ENCODE measurements at regions of chr11 and their contacts with region 1.

Region 1: GRCh38 chr11:2532704-2533586 is 88.1 kb downstream of the KCNQ1 start:
- DNase-seq: peak; percentile 93
- ATAC-seq: peak; percentile 88
- H3K4me3 Mint-ChIP-seq: peak overlapping the region; percentile 45
- H3K27ac Mint-ChIP-seq: no peak overlapping the region
- H3K4me1 Mint-ChIP-seq: peaks cover 19% of the 10 kb centered on the region
- H3K27me3 Mint-ChIP-seq: peaks cover 2% of the 10 kb centered on the region

Region 2: GRCh38 chr11:2305140-2305840 is 227.7 kb before region 1 on chr11:
- CTCF ChIA-PET with region 1: interaction called, 58 read pairs
- DNase-seq: peak; percentile 89
- ATAC-seq: peak; percentile 60
- H3K4me3 Mint-ChIP-seq: peak overlapping the region; percentile 69
- H3K27ac Mint-ChIP-seq: peak overlapping the region; percentile 84
- H3K4me1 Mint-ChIP-seq: peaks cover 42% of the 10 kb centered on the region
- H3K27me3 Mint-ChIP-seq: no peaks in the 10 kb centered on the region

Region 3: GRCh38 chr11:2436521-2437031 is 96.4 kb before region 1 on chr11:
- CTCF ChIA-PET with region 1: interaction called, 11 read pairs
- DNase-seq: no peak
- ATAC-seq: no peak
- H3K4me3 Mint-ChIP-seq: no peak overlapping the region
- H3K27ac Mint-ChIP-seq: no peak overlapping the region
- H3K4me1 Mint-ChIP-seq: peaks cover 4% of the 10 kb centered on the region
- H3K27me3 Mint-ChIP-seq: peaks cover 9% of the 10 kb centered on the region

Region 4: GRCh38 chr11:2466869-2467698 is 65.9 kb before region 1 on chr11:
- CTCF ChIA-PET with region 1: interaction called, 24 read pairs
- DNase-seq: peak; percentile 90
- ATAC-seq: peak; percentile 95
- H3K4me3 Mint-ChIP-seq: peak overlapping the region; percentile 33
- H3K27ac Mint-ChIP-seq: peak overlapping the region; percentile 64
- H3K4me1 Mint-ChIP-seq: peaks cover 26% of the 10 kb centered on the region
- H3K27me3 Mint-ChIP-seq: peaks cover 22% of the 10 kb centered on the region

Region 5: DNA sequence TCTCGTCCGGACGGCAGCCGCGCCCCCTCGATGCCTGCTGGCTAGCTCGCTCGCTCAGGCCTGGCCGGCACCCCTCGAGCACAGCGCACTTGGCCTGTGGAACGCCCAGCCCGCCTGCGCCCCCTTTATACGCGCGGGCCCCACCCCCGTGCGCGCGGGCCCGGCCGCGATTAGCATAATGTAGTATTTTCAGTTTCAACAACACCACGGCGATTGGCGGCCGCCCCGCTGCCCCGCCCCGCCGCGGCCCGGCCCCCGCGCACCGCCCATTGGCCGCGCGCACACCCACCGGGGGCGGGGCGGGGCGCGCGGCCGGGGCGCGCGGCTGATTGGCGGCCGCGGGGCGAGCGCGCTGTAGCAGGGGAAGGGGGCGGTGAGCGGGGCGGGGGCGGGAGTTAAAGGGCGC is 352.7 kb after region 1 on chr11 and contains the start of gene CDKN1C:
- CTCF ChIA-PET with region 1: interaction called, 471 read pairs
- DNase-seq: peak; percentile 83
- ATAC-seq: peak; percentile 92
- H3K4me3 Mint-ChIP-seq: peak within 1 kb of the TSS; percentile 75
- H3K27ac Mint-ChIP-seq: no peak within 1 kb of the TSS
- H3K4me1 Mint-ChIP-seq: peaks cover 9% of the 10 kb centered on the region
- H3K27me3 Mint-ChIP-seq: peaks cover 35% of the 10 kb centered on the region
- total RNA-seq, gene CDKN1C: 0.44 to 0.87 TPM

Region 6: DNA sequence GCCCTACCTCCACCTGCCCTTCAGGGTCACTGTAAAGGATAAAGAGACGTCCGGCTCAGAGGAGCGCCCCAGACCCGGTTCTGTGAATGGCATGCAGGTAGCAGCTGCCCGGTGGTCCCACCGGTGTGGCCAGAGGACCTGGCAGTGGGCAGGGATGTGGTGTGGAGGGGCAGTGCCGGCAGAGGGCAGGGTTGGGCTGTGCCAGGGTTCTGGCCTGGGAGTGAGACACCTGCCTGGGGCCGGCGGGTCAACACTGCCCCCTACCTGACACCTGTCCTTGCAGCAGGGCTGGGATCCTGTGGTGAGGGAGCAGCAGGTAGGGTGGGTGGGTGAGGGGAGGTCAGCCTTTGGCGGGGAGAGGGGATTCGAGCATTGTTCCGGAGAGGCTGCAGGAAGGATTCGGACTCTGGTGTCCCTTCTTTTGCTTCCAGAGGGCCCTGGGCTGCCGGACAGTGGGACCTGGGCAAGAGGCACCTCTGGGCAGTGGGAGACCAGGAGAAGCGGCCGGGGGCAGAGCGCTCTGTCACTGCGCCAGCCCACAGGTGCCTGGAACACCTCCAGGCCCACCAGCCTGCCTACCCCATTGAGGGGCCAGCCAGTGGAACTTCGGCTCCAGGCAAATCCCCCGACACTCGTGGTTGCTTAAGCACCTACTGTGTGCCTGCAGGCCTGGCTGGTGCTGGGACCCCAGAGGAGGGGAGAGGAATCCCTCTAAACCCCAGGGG is 397.9 kb after region 1 on chr11:
- CTCF ChIA-PET with region 1: interaction called, 50 read pairs
- DNase-seq: peak; percentile 74
- ATAC-seq: peak; percentile 21
- H3K4me3 Mint-ChIP-seq: peak overlapping the region; percentile 63
- H3K27ac Mint-ChIP-seq: peak overlapping the region; percentile 63
- H3K4me1 Mint-ChIP-seq: peaks cover 38% of the 10 kb centered on the region
- H3K27me3 Mint-ChIP-seq: peaks cover 22% of the 10 kb centered on the region